SK-N-SH (cell line): ENCODE measurements at regions of chr3 and their contacts with region 1.

Region 1: GRCh38 chr3:54146506-54147239 is 24.3 kb downstream of the CACNA2D3 start:
- DNase-seq: peak; percentile 82
- H3K4me3 ChIP-seq: peak overlapping the region in 1 of 2 experiments; percentile 29; a peak in 2 of 4 replicates
- H3K27ac ChIP-seq: no peak overlapping the region
- H3K4me1 ChIP-seq: peaks cover 0 to 2% of the 10 kb centered on the region in 2 experiments; a peak in 1 of 4 replicates
- H3K27me3 ChIP-seq: no peaks in the 10 kb centered on the region
- CTCF ChIP-seq: no peak
- EP300 ChIP-seq: no peak
- RAD21 ChIP-seq: peak; percentile 86

Region 2: DNA sequence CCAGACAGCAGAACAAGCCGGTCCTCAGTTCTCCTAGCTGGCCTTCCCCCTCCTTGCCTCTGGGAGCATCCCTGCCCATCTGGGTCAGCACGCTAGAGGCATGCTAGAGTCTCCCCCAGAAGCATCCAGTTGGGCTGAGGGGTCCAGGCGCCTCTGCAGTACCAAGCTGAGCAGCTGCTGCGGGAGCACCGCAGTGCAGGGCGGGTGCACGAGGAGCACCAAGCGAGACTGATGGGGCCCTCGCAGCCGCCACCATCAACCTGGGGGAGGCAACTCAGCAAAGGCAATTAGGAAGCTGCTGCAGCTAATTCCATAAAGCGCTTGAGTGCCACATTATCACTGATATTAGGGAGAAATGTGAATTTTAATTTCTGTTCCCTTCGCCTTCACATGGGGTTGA is 12.0 kb before region 1 on chr3:
- CTCF ChIA-PET with region 1: interaction called, 30 read pairs
- POLR2A ChIA-PET with region 1: no interaction called
- DNase-seq: no peak
- H3K4me3 ChIP-seq: no peak overlapping the region
- H3K27ac ChIP-seq: no peak overlapping the region
- H3K4me1 ChIP-seq: no peaks in the 10 kb centered on the region; a peak in 1 of 4 replicates
- H3K27me3 ChIP-seq: no peaks in the 10 kb centered on the region
- CTCF ChIP-seq: no peak
- EP300 ChIP-seq: no peak
- RAD21 ChIP-seq: no peak

Region 3: GRCh38 chr3:54157860-54158259 is 11.2 kb after region 1 on chr3:
- CTCF ChIA-PET with region 1: interaction called, 52 read pairs
- POLR2A ChIA-PET with region 1: no interaction called
- DNase-seq: no peak
- H3K4me3 ChIP-seq: no peak overlapping the region
- H3K27ac ChIP-seq: no peak overlapping the region
- H3K4me1 ChIP-seq: no peaks in the 10 kb centered on the region
- H3K27me3 ChIP-seq: no peaks in the 10 kb centered on the region
- CTCF ChIP-seq: no peak
- EP300 ChIP-seq: no peak
- RAD21 ChIP-seq: no peak

Region 4: GRCh38 chr3:54374214-54374855 is 227.7 kb after region 1 on chr3:
- CTCF ChIA-PET with region 1: interaction called, 21 read pairs
- POLR2A ChIA-PET with region 1: no interaction called
- DNase-seq: peak; percentile 23
- H3K4me3 ChIP-seq: no peak overlapping the region
- H3K27ac ChIP-seq: no peak overlapping the region
- H3K4me1 ChIP-seq: no peaks in the 10 kb centered on the region; a peak in 1 of 4 replicates
- H3K27me3 ChIP-seq: no peaks in the 10 kb centered on the region
- CTCF ChIP-seq: no peak
- EP300 ChIP-seq: no peak
- RAD21 ChIP-seq: peak; percentile 55